Panc1 (cell line): ENCODE measurements at regions of chr13 and their contacts with region 1.

Region 1: DNA sequence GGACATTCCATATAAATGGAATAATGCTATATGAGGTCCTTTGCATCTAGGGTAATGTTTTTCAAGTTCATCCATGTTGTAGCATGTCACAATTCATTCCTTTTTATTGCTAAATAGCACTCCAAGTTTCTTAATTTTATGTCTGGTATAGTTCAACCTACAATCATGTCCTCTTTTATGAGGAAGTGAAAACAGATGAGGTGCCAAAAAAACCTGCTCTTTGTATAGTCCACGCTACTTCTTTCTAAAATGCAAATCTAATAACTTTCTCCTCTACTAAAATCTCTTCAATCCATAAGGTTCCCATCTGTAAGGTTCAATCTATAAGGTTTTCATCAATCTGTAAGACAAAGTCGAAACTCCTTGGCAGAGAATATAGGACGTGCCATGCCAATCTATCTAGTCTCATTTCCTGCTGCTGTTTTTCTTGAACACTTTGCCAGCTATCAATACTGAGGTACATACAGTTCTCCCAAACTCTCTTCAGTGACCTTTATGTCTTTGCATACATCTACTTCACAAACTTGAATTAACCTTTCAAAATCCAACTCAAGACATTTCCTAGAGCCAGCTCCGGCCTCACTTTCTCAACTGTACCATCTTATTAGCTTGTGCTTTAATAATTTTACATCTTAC is 33.7 kb downstream of the INTS6 start:
- DNase-seq: no peak
- ATAC-seq: no peak
- H3K4me3 ChIP-seq: no peak overlapping the region
- H3K27ac ChIP-seq: no peak overlapping the region
- H3K4me1 ChIP-seq: no peaks in the 10 kb centered on the region
- H3K27me3 ChIP-seq: no peaks in the 10 kb centered on the region
- CTCF ChIP-seq: no peak

Region 2: GRCh38 chr13:51444922-51445321 is 25.8 kb after region 1 on chr13:
- CTCF ChIA-PET with region 1: interaction called, 14 read pairs
- POLR2A ChIA-PET with region 1: no interaction called
- in situ Hi-C with region 1: no loop called
- intact Hi-C with region 1: no loop called
- DNase-seq: no peak
- ATAC-seq: no peak
- H3K4me3 ChIP-seq: no peak overlapping the region
- H3K27ac ChIP-seq: no peak overlapping the region
- H3K4me1 ChIP-seq: no peaks in the 10 kb centered on the region
- H3K27me3 ChIP-seq: no peaks in the 10 kb centered on the region
- CTCF ChIP-seq: peak; percentile 22; the same call in 1 of the 2 replicates